ENCODE measurements at regions of chr18 and their contacts with region 1.

Region 1: DNA sequence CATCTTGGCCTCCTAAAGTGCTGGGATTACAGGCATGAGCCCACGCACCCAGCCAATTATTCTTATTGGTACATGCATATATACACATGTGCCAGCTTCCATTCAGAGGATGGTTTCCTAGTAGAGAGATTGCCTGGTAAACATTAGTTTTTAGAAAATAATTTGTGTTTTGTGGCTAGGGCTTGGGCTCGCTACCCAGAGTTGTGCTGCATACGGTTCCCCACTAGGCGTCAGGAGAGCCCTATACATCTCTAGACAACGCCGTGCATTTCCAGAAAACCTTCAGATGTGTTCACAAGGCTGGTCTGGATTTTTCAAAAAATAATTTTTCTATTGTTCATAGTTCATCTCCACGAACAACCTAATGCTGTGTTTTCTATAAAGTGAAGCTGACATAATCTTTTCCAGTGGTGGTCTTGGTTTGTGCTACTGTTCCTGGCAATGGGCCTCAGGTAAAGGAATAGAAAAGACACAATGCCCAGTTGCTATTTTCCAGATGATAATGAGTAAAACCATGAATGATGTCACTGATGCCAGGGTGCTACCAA is 14.7 kb upstream of the AFG3L2 start:
- DNase-seq: peak in 2 of 4 donors; percentile 54 to 75
- ATAC-seq: peak; percentile 98
- H3K4me3 ChIP-seq: no peak overlapping the region
- H3K27ac ChIP-seq: no peak overlapping the region
- H3K4me1 ChIP-seq: no peaks in the 10 kb centered on the region
- H3K27me3 ChIP-seq: no peaks in the 10 kb centered on the region
- CTCF ChIP-seq: peak; percentile 88 to 90

Region 2: GRCh38 chr18:11826836-11827235 is 564.9 kb before region 1 on chr18:
- intact Hi-C with region 1: no loop called
- DNase-seq: no peak
- ATAC-seq: no peak
- H3K4me3 ChIP-seq: no peak overlapping the region
- H3K27ac ChIP-seq: no peak overlapping the region
- H3K4me1 ChIP-seq: no peaks in the 10 kb centered on the region
- H3K27me3 ChIP-seq: no peaks in the 10 kb centered on the region
- CTCF ChIP-seq: no peak

Region 3: DNA sequence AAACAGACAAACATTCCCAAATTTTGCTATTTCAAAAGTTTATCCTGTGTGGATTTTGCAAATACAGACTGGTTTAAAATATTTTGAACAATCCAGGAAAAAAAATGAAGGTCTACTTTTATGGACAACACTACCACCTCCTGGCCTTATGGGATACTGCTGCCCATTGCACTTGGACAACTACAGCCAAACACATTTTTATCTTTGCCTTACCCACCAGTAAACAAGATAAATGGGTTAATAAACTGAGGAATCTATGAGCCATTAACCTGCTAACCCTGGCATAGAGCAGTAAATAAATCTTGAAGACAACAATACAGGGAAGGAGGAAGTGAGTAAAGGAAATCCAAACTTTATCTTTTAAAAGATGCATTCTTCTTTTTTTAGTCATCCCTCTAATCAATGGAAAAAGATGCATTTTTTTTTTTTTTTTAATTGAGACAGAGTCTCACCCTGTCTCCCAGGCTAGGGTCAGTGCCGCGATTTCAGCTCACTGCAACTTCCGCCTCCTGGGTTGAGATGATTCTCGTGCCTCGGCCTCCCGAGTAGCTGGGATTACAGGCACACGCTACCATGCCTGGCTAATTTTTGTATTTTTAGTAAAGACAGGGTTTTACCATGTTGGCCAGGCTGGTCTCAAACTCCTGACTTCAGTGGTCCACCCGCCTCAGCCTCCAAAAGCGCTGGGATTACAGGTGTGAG is 268.4 kb after region 1 on chr18:
- intact Hi-C with region 1: loop called (anchors 5 to 10 kb)
- DNase-seq: peak in 2 of 4 donors; percentile 51 to 70
- ATAC-seq: peak; percentile 42
- H3K4me3 ChIP-seq: no peak overlapping the region
- H3K27ac ChIP-seq: no peak overlapping the region
- H3K4me1 ChIP-seq: peaks cover 9 to 32% of the 10 kb centered on the region in 2 donors
- H3K27me3 ChIP-seq: peaks cover 0 to 22% of the 10 kb centered on the region in 2 donors
- CTCF ChIP-seq: peak; percentile 91 to 92